Activated T-helper 1 cell treated with anti-CD3 and anti-CD28 coated beads, Interleukin-12 subunit alpha, Interleukin-12 subunit beta, Interleukin-2, Interleukin-4 antibody, amounts not matched to agents 30 ng/mL and 10 ng/mL and 1 ng/mL, durations not matched to agents 14 hours and 24 hours and 36 hours (primary cell): ENCODE measurements at regions of chr3 and their contacts with region 1.

Region 1: DNA sequence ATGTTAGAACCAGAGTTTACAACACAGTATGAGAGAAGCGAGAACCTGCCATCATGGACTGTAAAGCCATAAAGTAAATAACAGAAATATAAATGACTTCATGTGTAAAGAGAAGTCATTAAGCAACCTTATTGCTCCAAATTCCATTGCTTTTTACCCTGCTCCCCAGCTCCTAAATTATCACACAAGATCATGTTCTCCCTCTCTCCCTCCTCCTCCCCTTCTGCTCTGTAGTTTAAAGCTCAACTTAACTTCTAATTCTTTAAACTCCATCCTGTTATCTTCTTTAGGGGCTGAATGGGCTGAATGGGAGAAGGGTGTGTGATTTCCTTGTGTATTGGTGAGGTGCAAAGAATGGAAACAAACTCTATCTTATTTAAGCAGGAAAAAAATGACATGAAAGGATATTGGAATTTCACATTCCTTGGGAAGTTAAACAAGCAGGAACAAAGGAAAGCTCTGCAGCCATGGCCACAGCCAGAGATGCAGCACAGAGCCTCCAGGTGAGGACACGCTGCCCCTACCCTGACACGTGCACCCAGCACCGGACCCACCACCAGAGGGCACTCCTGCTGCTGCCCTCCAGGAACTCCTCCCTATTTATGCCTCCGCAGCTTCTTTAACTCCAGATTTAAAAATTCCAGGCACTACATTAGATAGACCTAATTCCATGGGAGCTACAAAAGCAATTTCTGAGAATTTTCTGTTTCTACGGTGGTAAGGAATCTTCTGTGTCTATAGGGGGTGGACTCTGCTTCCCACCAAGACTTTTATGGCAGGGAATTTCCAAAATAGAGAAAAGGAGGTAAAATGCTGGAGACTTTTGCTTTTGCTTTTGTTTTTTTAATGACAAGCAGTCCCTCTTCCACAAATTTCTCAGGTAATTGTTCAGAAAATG is 76.9 kb upstream of the ABI3BP start:
- DNase-seq: peak; percentile 32
- H3K4me3 Mint-ChIP-seq: no peak overlapping the region
- H3K27ac Mint-ChIP-seq: no peak overlapping the region
- H3K4me1 Mint-ChIP-seq: no peaks in the 10 kb centered on the region
- H3K27me3 Mint-ChIP-seq: peaks cover 11% of the 10 kb centered on the region

Region 2: DNA sequence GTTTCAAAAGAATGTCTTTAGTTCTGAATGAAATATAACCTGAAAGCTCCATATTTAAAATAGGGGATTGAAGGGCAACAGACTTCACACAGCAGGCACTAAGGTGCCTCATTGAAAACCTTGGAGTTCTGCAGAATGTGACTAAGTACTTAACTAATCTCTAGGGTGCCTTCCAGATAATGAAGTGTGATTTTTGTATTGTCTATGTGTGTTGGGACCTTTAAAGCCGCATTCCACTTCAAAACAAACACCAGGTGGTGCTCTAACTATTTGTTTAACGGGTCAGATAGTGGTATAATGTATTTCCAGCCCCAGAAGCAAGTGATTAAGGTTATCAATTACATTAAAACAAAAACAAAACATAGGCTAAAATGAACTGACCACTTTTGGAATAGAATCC is 332.8 kb before region 1 on chr3:
- intact Hi-C with region 1: no loop called
- DNase-seq: no peak
- H3K4me3 Mint-ChIP-seq: no peak overlapping the region
- H3K27ac Mint-ChIP-seq: no peak overlapping the region
- H3K4me1 Mint-ChIP-seq: peaks cover 32% of the 10 kb centered on the region
- H3K27me3 Mint-ChIP-seq: no peaks in the 10 kb centered on the region

Region 3: DNA sequence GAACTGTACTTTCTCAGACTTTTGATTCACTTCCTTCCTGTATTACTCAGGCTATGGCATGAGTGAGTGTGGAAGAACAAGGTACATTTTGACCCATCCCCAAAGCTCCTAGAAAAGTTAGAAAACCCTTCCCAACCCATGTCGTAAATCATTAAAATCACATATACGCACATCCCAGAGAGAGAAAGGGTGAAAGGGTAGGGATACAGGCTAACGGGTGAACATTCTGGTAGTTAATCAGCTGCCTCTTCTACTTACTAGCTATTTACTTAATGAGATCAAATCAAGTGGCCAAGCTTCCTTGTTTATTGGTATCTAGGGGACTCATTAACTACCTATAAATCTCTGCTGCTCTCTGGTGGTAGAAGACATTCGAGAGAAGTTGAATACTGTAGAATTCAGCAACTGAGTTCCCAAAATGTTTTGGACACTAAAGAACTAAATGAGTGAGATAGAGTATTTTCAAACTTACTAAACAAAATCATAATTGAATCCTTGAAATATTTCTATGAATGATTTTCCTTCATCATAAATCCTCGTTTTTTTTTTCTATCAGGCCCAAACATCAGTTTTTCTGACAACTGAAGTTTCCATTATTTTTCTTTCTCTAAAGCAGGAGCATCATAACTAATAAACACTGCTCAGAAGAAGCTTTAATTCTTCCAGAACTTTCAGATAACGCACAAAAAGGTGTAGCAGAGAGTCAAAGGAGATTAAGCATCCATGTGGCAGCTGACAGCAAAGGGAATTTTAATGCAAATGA is 126.0 kb after region 1 on chr3:
- intact Hi-C with region 1: loop called (anchors 1 kb)
- DNase-seq: no peak
- H3K4me3 Mint-ChIP-seq: no peak overlapping the region
- H3K27ac Mint-ChIP-seq: no peak overlapping the region
- H3K4me1 Mint-ChIP-seq: no peaks in the 10 kb centered on the region
- H3K27me3 Mint-ChIP-seq: peaks cover 4% of the 10 kb centered on the region

Region 4: GRCh38 chr3:101635954-101636798 is 566.0 kb after region 1 on chr3:
- intact Hi-C with region 1: loop called (anchors 1 kb)
- DNase-seq: peak; percentile 56
- H3K4me3 Mint-ChIP-seq: no peak overlapping the region
- H3K27ac Mint-ChIP-seq: no peak overlapping the region
- H3K4me1 Mint-ChIP-seq: no peaks in the 10 kb centered on the region
- H3K27me3 Mint-ChIP-seq: peaks cover 4% of the 10 kb centered on the region